ENCODE measurements at regions of chr12 and their contacts with region 1.

Region 1: DNA sequence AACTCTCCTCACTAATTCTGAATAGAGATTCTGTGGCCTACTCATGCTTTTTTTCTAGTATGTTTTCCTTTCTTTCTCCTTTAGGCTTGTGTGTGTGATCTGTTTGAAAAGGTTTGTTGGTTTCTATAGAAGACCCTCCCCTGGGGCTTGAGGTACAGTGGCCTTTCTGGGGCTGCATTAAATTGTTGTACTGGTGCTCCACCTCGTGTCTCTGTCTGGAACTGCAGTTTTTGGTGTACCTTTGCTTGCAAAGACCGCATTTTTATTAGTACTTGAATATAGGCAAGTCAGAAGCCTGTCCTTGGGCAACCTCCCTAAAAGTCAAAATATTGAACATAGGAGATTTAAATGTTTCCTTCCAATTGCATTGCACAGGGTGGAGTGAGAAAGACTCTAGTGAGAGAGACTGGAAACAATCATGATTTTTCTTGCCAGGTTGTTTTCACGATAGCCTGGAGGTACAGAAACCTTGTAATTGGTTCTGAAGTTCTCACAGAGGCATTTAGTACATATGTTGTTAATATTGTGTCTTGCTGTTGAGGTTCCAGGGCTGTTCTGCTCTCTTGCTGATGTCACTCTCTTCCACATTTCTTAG is 39.0 kb downstream of the SLCO1B1 start:
- DNase-seq: peak; percentile 13 to 43 (median 22)
- ATAC-seq: no peak
- H3K4me3 ChIP-seq: no peak overlapping the region
- H3K27ac ChIP-seq: no peak overlapping the region
- H3K4me1 ChIP-seq: no peaks in the 10 kb centered on the region
- H3K27me3 ChIP-seq: no peaks in the 10 kb centered on the region
- CTCF ChIP-seq: peak; percentile 40 to 64 (median 51)
- EP300 ChIP-seq: no peak
- POLR2A ChIP-seq: no peak
- RAD21 ChIP-seq: peak; percentile 42 to 69; a peak in 3 of 4 replicates

Region 2: GRCh38 chr12:20463913-20464524 is 706.0 kb before region 1 on chr12:
- CTCF ChIA-PET with region 1: no interaction called
- POLR2A ChIA-PET with region 1: no interaction called
- in situ Hi-C with region 1: no loop called
- intact Hi-C with region 1: loop called (anchors 5 kb)
- DNase-seq: peak in 1 of 4 experiments; percentile 0
- ATAC-seq: no peak
- H3K4me3 ChIP-seq: no peak overlapping the region
- H3K27ac ChIP-seq: no peak overlapping the region
- H3K4me1 ChIP-seq: no peaks in the 10 kb centered on the region
- H3K27me3 ChIP-seq: no peaks in the 10 kb centered on the region
- CTCF ChIP-seq: peak in 1 of 3 experiments; percentile 23; a peak in 1 of 6 replicates
- EP300 ChIP-seq: no peak
- POLR2A ChIP-seq: no peak
- RAD21 ChIP-seq: peak in 1 of 2 experiments; percentile 18; a peak in 1 of 4 replicates

Region 3: DNA sequence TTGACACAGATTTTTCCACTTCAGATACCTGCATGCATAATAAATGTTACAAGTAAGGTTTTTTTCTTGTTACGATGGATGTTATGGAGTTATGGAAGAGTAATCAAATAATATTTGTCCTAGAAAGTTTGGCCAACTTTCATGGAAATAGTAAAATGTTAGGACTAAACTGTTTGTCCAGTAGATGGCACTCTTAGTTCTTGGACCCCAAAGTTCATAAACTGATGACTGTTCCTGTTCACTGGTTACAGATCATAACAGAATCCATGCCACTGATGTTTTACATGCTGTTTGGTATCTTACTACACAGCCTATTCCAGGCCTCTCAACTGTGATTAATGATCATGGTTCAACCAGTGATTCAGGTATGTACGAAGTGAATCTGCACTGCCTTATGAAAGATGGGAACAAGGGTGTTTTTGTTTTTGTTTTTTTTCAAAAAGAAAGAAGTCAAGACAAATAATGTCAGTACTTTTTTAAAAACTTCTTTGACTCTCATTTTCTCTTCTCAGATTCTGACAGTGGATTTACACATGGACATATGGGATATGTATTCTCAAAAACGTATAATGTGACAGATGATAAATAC is 523.6 kb before region 1 on chr12:
- CTCF ChIA-PET with region 1: no interaction called
- POLR2A ChIA-PET with region 1: no interaction called
- in situ Hi-C with region 1: no loop called
- intact Hi-C with region 1: loop called (anchors 5 kb)
- DNase-seq: peak in 1 of 4 experiments; percentile 3
- ATAC-seq: no peak
- H3K4me3 ChIP-seq: no peak overlapping the region
- H3K27ac ChIP-seq: no peak overlapping the region
- H3K4me1 ChIP-seq: no peaks in the 10 kb centered on the region
- H3K27me3 ChIP-seq: no peaks in the 10 kb centered on the region
- CTCF ChIP-seq: peak in 2 of 3 experiments; percentile 16 to 25; a peak in 1 of 6 replicates
- EP300 ChIP-seq: no peak
- POLR2A ChIP-seq: no peak
- RAD21 ChIP-seq: peak in 1 of 2 experiments; percentile 47; a peak in 2 of 4 replicates

Measured in K562 (cell line).